A673 (cell line): ENCODE measurements at regions of chr11 and their contacts with region 1.

Region 1: GRCh38 chr11:82718307-82718706 is 15.4 kb downstream of the FAM181B start:
- DNase-seq: peak; percentile 69
- H3K4me3 ChIP-seq: no peak overlapping the region
- H3K27ac ChIP-seq: no peak overlapping the region
- H3K4me1 ChIP-seq: no peaks in the 10 kb centered on the region
- H3K27me3 ChIP-seq: peaks cover 1% of the 10 kb centered on the region
- CTCF ChIP-seq: peak; percentile 87

Region 2: DNA sequence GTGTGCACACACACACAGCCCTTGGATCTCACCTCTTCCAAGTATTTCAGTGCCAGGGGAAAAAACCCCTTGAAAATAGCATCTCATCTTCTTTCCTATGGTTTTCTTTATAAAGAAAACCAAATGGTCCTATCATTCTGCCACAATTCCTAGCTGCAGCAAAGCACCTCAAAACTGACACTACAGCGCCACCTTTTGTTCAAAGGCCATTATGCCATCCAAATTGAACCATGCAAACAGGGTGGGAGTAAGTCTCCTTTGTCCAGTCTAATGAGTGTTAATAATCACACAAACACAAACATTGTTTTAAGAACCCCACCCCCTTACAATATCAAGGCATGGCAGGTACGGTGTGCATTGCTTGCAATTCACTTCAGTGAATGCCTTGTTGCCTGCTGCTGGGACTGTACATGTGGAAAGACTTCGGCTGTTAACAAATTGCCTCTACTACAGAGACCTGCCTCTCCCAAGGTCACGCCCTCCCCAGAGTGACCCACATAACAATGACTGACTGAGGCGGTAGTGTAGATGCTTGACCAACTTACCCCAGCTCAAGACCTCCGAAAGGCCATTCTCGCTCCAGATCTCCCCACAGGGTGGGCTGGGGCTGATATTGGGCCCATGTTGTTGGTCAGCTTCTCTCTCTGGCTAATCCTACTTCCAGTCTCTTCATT is 16.3 kb before region 1 on chr11:
- CTCF ChIA-PET with region 1: no interaction called
- POLR2A ChIA-PET with region 1: no interaction called
- intact Hi-C with region 1: no loop called
- DNase-seq: peak; percentile 75
- H3K4me3 ChIP-seq: no peak overlapping the region
- H3K27ac ChIP-seq: no peak overlapping the region
- H3K4me1 ChIP-seq: no peaks in the 10 kb centered on the region
- H3K27me3 ChIP-seq: no peaks in the 10 kb centered on the region
- CTCF ChIP-seq: peak; percentile 94

Region 3: GRCh38 chr11:82927254-82927880 is 209.1 kb after region 1 on chr11:
- CTCF ChIA-PET with region 1: no interaction called
- POLR2A ChIA-PET with region 1: no interaction called
- intact Hi-C with region 1: loop called (anchors 10 kb)
- DNase-seq: peak; percentile 74
- H3K4me3 ChIP-seq: no peak overlapping the region
- H3K27ac ChIP-seq: no peak overlapping the region
- H3K4me1 ChIP-seq: no peaks in the 10 kb centered on the region
- H3K27me3 ChIP-seq: no peaks in the 10 kb centered on the region
- CTCF ChIP-seq: peak; percentile 93